GM12878 (cell line): ENCODE measurements at regions of chr13 and their contacts with region 1.

Region 1: GRCh38 chr13:36395280-36395679 is 37.0 kb upstream of the CCNA1 start:
- DNase-seq: no peak
- ATAC-seq: peak; percentile 91
- H3K4me3 ChIP-seq: no peak overlapping the region
- H3K27ac ChIP-seq: no peak overlapping the region
- H3K4me1 ChIP-seq: no peaks in the 10 kb centered on the region
- H3K27me3 ChIP-seq: no peaks in the 10 kb centered on the region
- CTCF ChIP-seq: peak; percentile 13 to 59 (median 26); a peak in 3 of 6 replicates
- EP300 ChIP-seq: no peak
- POLR2A ChIP-seq: no peak
- RAD21 ChIP-seq: peak; percentile 42

Region 2: GRCh38 chr13:36352350-36352749 is 42.9 kb before region 1 on chr13:
- CTCF ChIA-PET with region 1: interaction called, 94 read pairs
- POLR2A ChIA-PET with region 1: no interaction called
- RAD21 ChIA-PET with region 1: interaction called, 37 read pairs
- SMC1A ChIA-PET with region 1: interaction called, 27 read pairs
- in situ Hi-C with region 1: no loop called
- intact Hi-C with region 1: no loop called
- DNase-seq: no peak
- ATAC-seq: no peak
- H3K4me3 ChIP-seq: no peak overlapping the region
- H3K27ac ChIP-seq: no peak overlapping the region
- H3K4me1 ChIP-seq: no peaks in the 10 kb centered on the region
- H3K27me3 ChIP-seq: no peaks in the 10 kb centered on the region
- CTCF ChIP-seq: no peak
- EP300 ChIP-seq: no peak
- POLR2A ChIP-seq: no peak
- RAD21 ChIP-seq: no peak

Region 3: GRCh38 chr13:36841391-36841790 is 446.1 kb after region 1 on chr13:
- CTCF ChIA-PET with region 1: no interaction called
- POLR2A ChIA-PET with region 1: no interaction called
- RAD21 ChIA-PET with region 1: no interaction called
- SMC1A ChIA-PET with region 1: no interaction called
- in situ Hi-C with region 1: no loop called
- intact Hi-C with region 1: no loop called
- DNase-seq: no peak
- ATAC-seq: no peak
- H3K4me3 ChIP-seq: no peak overlapping the region
- H3K27ac ChIP-seq: no peak overlapping the region
- H3K4me1 ChIP-seq: no peaks in the 10 kb centered on the region
- H3K27me3 ChIP-seq: no peaks in the 10 kb centered on the region
- CTCF ChIP-seq: peak in 1 of 3 experiments; percentile 27; a peak in 2 of 6 replicates
- EP300 ChIP-seq: no peak
- POLR2A ChIP-seq: no peak
- RAD21 ChIP-seq: peak; percentile 33